ENCODE measurements at regions of chr1 and their contacts with region 1.

Region 1: DNA sequence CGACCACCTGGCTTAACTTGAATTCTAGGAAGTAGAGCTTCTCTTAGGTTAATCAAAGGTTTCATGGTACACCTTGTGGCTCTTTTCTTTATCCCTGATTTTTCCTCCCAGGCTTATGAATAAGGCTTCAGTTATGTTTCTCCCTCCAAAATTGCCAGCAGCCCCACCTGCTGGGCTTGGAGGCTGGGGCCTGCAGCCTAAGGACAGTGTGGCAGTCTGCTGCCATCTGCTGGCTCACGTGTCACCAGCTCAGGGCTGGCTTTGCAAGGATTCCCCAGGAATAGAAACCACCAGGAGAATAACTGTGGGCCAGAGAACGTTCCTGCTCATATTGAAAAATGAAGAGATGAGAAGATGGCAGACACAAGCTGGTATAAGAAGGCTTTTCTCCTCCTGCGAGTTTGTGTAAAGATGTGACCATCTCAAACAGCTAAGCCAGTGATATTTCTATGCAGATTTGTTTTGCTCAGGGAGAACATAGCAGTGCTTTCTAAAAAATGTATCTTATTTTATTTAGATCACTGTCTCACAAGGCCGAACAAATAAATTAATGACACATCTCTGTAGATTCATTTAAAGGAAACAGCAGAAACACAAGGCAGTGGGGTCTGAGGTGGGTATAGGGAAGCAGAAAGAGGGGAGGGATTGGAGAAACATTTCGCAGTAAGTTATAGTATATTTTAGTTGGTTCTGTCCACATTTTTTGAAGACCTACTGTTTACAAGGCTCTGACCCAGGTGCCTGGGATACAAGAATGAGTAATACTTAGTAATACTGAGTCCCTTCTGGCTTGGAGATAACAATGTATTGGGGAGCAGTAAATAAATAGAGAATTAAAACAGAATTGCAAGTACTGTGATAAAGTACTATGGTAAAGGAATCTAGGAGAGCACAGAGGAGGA is 291.1 kb upstream of the SGIP1 start:
- DNase-seq: peak; percentile 87
- H3K4me3 Mint-ChIP-seq: no peak overlapping the region
- H3K27ac Mint-ChIP-seq: no peak overlapping the region
- H3K4me1 Mint-ChIP-seq: peaks cover 30% of the 10 kb centered on the region
- H3K27me3 Mint-ChIP-seq: peaks cover 6% of the 10 kb centered on the region

Region 2: GRCh38 chr1:65067491-65068201 is 1175.3 kb before region 1 on chr1:
- CTCF ChIA-PET with region 1: no interaction called
- intact Hi-C with region 1: loop called (anchors 10 kb)
- DNase-seq: peak; percentile 71
- H3K4me3 Mint-ChIP-seq: peak overlapping the region; percentile 87
- H3K27ac Mint-ChIP-seq: peak overlapping the region; percentile 95
- H3K4me1 Mint-ChIP-seq: peaks cover 51% of the 10 kb centered on the region
- H3K27me3 Mint-ChIP-seq: no peaks in the 10 kb centered on the region

Region 3: GRCh38 chr1:65717815-65718454 is 525.0 kb before region 1 on chr1:
- CTCF ChIA-PET with region 1: interaction called, 3 read pairs
- intact Hi-C with region 1: loop called (anchors 1 kb)
- DNase-seq: peak; percentile 43
- H3K4me3 Mint-ChIP-seq: no peak overlapping the region
- H3K27ac Mint-ChIP-seq: no peak overlapping the region
- H3K4me1 Mint-ChIP-seq: no peaks in the 10 kb centered on the region
- H3K27me3 Mint-ChIP-seq: peaks cover 5% of the 10 kb centered on the region

Region 4: GRCh38 chr1:66069976-66070876 is 172.7 kb before region 1 on chr1:
- CTCF ChIA-PET with region 1: interaction called, 3 read pairs
- intact Hi-C with region 1: loop called (anchors 1 kb)
- DNase-seq: no peak
- H3K4me3 Mint-ChIP-seq: no peak overlapping the region
- H3K27ac Mint-ChIP-seq: no peak overlapping the region
- H3K4me1 Mint-ChIP-seq: no peaks in the 10 kb centered on the region
- H3K27me3 Mint-ChIP-seq: peaks cover 21% of the 10 kb centered on the region

Region 5: GRCh38 chr1:66223681-66224080 is 19.2 kb before region 1 on chr1:
- CTCF ChIA-PET with region 1: interaction called, 37 read pairs
- intact Hi-C with region 1: no loop called
- DNase-seq: peak; percentile 49
- H3K4me3 Mint-ChIP-seq: no peak overlapping the region
- H3K27ac Mint-ChIP-seq: peak overlapping the region; percentile 1
- H3K4me1 Mint-ChIP-seq: peaks cover 8% of the 10 kb centered on the region
- H3K27me3 Mint-ChIP-seq: peaks cover 3% of the 10 kb centered on the region

Region 6: GRCh38 chr1:66282343-66282852 is 39.5 kb after region 1 on chr1:
- CTCF ChIA-PET with region 1: interaction called, 6 read pairs
- intact Hi-C with region 1: loop called (anchors 1 kb)
- DNase-seq: peak; percentile 89
- H3K4me3 Mint-ChIP-seq: peak overlapping the region; percentile 17
- H3K27ac Mint-ChIP-seq: peak overlapping the region; percentile 89
- H3K4me1 Mint-ChIP-seq: peaks cover 87% of the 10 kb centered on the region
- H3K27me3 Mint-ChIP-seq: no peaks in the 10 kb centered on the region

Region 7: DNA sequence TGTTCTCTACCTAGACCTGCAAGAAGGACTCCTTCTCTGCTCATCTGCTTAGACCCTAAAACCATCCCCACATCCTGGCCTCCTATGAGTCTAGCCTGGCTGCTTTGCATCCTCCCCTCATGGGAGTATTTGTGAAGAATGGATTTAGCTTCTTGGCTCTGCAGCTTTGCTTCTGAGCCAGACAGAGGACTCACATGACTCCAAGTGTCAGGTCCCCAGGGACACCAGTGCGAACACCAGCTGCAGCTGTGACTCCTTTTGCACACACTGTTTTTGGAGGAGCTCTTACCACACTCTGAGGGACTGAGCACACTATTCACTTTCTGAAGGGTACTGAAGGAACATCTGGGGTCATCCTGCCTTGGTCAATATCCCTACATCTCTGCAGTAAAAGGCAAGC is 159.3 kb after region 1 on chr1:
- CTCF ChIA-PET with region 1: interaction called, 3 read pairs
- intact Hi-C with region 1: loop called (anchors 1 kb)
- DNase-seq: no peak
- H3K4me3 Mint-ChIP-seq: no peak overlapping the region
- H3K27ac Mint-ChIP-seq: no peak overlapping the region
- H3K4me1 Mint-ChIP-seq: peaks cover 32% of the 10 kb centered on the region
- H3K27me3 Mint-ChIP-seq: no peaks in the 10 kb centered on the region